HEK293T (cell line): ENCODE measurements at regions of chr10 and their contacts with region 1.

Region 1: DNA sequence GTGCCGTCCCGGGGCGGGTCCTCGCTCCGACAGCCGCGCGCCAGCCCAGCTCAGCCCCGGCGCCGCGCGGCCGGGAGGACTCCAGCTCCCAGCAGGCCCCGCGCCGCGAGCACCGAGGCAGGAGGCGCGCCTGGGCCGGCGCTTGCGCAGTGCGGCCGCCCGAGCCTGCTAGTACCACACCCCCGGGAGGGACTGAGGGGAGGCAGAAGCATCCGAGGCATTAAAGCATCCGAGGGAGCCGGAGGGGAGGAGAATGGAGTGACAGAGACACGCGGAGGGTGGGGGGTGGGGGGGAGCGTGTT is at the start of gene GRK5:
- DNase-seq: peak; percentile 98

Region 2: GRCh38 chr10:119418307-119418706 is 211.0 kb after region 1 on chr10:
- CTCF ChIA-PET with region 1: interaction called, 18 read pairs
- POLR2A ChIA-PET with region 1: interaction called, 9 read pairs
- DNase-seq: no peak

Region 3: GRCh38 chr10:119445311-119445934 is 238.1 kb after region 1 on chr10:
- CTCF ChIA-PET with region 1: interaction called, 19 read pairs
- POLR2A ChIA-PET with region 1: no interaction called
- DNase-seq: peak; percentile 93